H1 (cell line): ENCODE measurements at regions of chr18 and their contacts with region 1.

Region 1: GRCh38 chr18:26621161-26622026 is 73.0 kb upstream of the KCTD1 start:
- DNase-seq: peak; percentile 33 to 84
- H3K4me3 ChIP-seq: no peak overlapping the region
- H3K27ac ChIP-seq: no peak overlapping the region
- H3K4me1 ChIP-seq: no peaks in the 10 kb centered on the region
- H3K27me3 ChIP-seq: no peaks in the 10 kb centered on the region
- CTCF ChIP-seq: peak; percentile 79 to 85 (median 82)
- EP300 ChIP-seq: no peak
- POLR2A ChIP-seq: no peak
- RAD21 ChIP-seq: peak; percentile 92 to 94

Region 2: GRCh38 chr18:26458526-26459232 is 162.7 kb before region 1 on chr18:
- CTCF ChIA-PET with region 1: interaction called, 20 read pairs
- POLR2A ChIA-PET with region 1: no interaction called
- DNase-seq: no peak
- H3K4me3 ChIP-seq: no peak overlapping the region
- H3K27ac ChIP-seq: no peak overlapping the region
- H3K4me1 ChIP-seq: peaks cover 3 to 7% (median 6%) of the 10 kb centered on the region in 4 experiments; a peak in 6 of 7 replicates
- H3K27me3 ChIP-seq: peaks cover 0 to 7% (median 5%) of the 10 kb centered on the region in 4 experiments; a peak in 3 of 7 replicates
- CTCF ChIP-seq: no peak
- EP300 ChIP-seq: no peak
- POLR2A ChIP-seq: no peak
- RAD21 ChIP-seq: no peak

Region 3: DNA sequence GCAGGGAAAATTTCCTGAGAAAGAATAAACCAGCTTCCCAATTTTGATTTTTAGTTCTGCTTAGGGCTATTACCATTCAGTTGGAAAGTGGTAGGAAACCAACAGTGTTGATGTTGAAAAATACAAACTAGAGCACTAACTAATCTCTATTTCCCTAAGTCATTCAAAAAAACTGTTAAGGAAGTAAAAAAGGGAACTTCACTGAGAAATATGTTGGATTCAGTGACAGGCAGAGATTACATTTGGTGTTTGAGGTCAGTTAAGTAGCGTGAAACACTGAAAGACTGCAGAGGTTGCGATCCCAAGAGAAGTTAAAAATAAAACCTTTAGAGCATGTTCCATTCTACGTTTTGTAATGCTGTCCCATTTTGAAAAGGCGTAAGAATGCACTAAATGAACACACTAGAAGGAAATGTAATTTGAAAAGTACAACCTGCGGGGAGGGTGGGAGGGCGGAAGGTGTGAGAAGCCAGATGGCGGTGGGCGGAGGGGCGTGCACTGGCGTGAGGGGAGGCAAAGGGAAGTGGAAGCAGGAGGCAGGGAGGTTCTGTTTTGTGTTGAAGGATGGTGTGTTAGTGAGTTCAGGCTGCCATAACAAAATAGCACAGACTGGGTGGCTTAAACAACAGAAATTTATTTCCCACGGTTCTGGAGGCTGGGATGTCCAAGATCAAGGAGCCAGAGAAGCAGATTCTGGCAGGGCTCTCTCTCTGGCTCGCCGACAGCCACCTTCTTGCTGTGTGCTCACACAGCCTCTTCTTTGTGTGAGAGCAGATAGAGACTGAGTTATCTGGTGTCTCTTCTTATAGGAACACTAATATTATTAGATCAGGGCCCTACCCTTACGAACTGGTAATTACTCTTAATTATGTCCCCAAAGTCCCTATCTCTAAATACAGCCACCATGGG is 21.3 kb after region 1 on chr18:
- CTCF ChIA-PET with region 1: interaction called, 16 read pairs
- POLR2A ChIA-PET with region 1: no interaction called
- DNase-seq: no peak
- H3K4me3 ChIP-seq: no peak overlapping the region
- H3K27ac ChIP-seq: no peak overlapping the region
- H3K4me1 ChIP-seq: no peaks in the 10 kb centered on the region
- H3K27me3 ChIP-seq: no peaks in the 10 kb centered on the region; a peak in 2 of 7 replicates
- CTCF ChIP-seq: no peak
- EP300 ChIP-seq: no peak
- POLR2A ChIP-seq: no peak
- RAD21 ChIP-seq: no peak

Region 4: DNA sequence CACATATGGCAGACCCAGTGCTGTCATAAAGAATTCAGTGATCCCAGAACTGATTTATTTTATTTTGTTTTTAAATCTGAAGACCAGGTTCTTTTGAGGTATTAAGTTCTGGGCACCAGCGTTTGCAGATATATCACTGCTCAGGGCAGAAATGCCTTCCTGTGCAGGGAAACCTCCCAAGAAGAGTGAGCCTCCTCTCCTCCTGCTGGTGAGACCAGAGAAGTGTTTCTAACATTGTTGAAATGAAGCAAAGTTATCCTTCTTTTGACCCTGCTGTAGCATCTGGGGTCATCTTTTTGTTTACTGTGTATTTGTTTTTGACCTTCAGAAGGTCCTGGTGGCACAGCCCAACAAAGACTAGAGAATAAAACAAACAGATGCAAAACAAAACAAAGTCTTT is 150.1 kb after region 1 on chr18:
- CTCF ChIA-PET with region 1: interaction called, 13 read pairs
- POLR2A ChIA-PET with region 1: no interaction called
- DNase-seq: no peak
- H3K4me3 ChIP-seq: no peak overlapping the region
- H3K27ac ChIP-seq: no peak overlapping the region
- H3K4me1 ChIP-seq: no peaks in the 10 kb centered on the region; a peak in 1 of 7 replicates
- H3K27me3 ChIP-seq: no peaks in the 10 kb centered on the region
- CTCF ChIP-seq: peak; percentile 37 to 83 (median 72)
- EP300 ChIP-seq: no peak
- POLR2A ChIP-seq: no peak
- RAD21 ChIP-seq: peak; percentile 80 to 81

Region 5: DNA sequence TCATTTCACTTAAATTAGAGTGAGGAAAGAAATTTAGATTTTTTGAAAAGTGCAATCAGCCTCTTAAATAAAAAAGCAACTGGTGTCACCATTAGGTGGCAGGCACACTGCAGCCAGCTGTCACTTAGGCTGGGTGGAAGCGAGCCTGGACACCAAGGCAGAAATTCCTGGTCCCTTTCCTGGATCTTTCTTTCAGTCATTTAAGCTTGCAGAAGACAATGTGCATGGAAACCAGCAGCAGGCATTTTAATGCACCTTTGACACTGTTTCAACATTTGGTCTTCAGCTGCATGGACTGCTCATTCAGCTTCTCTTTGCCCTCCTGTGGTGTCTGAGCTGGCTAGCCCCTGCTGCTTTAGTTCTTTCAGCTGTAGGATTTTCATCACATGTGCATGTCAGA is 183.1 kb after region 1 on chr18:
- CTCF ChIA-PET with region 1: interaction called, 15 read pairs
- POLR2A ChIA-PET with region 1: no interaction called
- DNase-seq: no peak
- H3K4me3 ChIP-seq: no peak overlapping the region
- H3K27ac ChIP-seq: no peak overlapping the region
- H3K4me1 ChIP-seq: no peaks in the 10 kb centered on the region
- H3K27me3 ChIP-seq: no peaks in the 10 kb centered on the region; a peak in 1 of 7 replicates
- CTCF ChIP-seq: peak; percentile 51 to 54 (median 51)
- EP300 ChIP-seq: no peak
- POLR2A ChIP-seq: no peak
- RAD21 ChIP-seq: peak; percentile 71 to 76

Region 6: GRCh38 chr18:26909599-26910290 is 288.4 kb after region 1 on chr18:
- CTCF ChIA-PET with region 1: no interaction called
- POLR2A ChIA-PET with region 1: no interaction called
- DNase-seq: no peak
- H3K4me3 ChIP-seq: no peak overlapping the region
- H3K27ac ChIP-seq: no peak overlapping the region
- H3K4me1 ChIP-seq: peaks cover 0 to 9% (median 0%) of the 10 kb centered on the region in 4 experiments; a peak in 1 of 7 replicates
- H3K27me3 ChIP-seq: no peaks in the 10 kb centered on the region
- CTCF ChIP-seq: no peak
- EP300 ChIP-seq: no peak
- POLR2A ChIP-seq: no peak
- RAD21 ChIP-seq: no peak